ENCODE measurements at regions of chr16 and their contacts with region 1.

Region 1: DNA sequence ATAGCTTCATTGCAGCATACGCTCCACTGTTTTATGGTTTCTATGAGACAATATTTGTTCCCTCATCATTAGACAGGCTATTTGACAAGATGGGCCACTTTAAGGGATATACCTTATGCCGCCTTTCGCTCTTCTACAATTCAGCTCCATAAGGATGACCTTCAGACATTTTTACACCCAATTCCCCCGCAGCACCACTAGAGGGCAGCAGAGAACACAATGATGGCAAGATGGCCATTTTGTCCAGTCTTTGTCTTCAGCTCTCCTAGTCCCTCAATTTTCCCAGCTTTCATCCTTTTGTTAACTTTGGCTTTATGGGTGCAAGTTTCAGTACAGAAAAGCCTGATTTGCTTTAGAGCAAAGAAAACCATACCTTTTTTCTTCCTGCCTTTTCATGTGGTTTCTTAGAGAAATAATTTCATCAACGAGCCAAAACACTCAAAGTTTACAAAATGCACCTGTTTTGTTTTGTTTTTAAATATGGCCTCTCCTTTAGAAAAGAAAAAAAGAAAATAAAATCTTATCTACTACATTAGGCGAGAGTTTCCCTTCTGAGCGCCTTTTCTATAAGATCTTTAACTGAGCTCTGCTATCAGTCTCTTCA is 355.3 kb downstream of the TOX3 start:
- DNase-seq: peak; percentile 15
- ATAC-seq: peak; percentile 69
- H3K4me3 ChIP-seq: no peak overlapping the region
- H3K27ac ChIP-seq: no peak overlapping the region
- H3K4me1 ChIP-seq: no peaks in the 10 kb centered on the region
- H3K27me3 ChIP-seq: no peaks in the 10 kb centered on the region
- CTCF ChIP-seq: peak; percentile 91
- EP300 ChIP-seq: no peak
- POLR2A ChIP-seq: no peak
- RAD21 ChIP-seq: peak; percentile 85

Region 2: DNA sequence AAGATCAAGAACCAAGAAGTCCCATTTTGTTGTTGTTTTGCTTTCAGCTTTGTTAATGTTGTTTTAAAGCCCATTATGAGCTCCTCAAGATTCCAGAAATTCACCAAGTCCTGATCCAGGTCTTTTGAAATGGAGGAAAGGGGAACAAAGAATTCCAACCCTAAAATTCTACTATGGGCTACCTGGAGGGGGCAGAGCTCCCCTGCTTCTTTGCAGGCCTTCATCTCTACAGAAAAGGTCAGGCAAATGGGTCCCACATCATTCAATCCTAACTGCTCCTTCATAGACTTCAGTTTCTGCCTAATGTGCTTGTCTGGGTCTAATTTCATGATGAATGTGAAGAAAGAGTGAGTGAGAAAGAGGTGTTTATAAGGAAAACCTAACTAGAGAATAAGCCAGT is 20.2 kb before region 1 on chr16:
- CTCF ChIA-PET with region 1: interaction called, 13 read pairs
- POLR2A ChIA-PET with region 1: no interaction called
- RAD21 ChIA-PET with region 1: no interaction called
- SMC1A ChIA-PET with region 1: interaction called, 3 read pairs
- in situ Hi-C with region 1: no loop called
- intact Hi-C with region 1: no loop called
- DNase-seq: no peak
- ATAC-seq: no peak
- H3K4me3 ChIP-seq: no peak overlapping the region
- H3K27ac ChIP-seq: no peak overlapping the region
- H3K4me1 ChIP-seq: no peaks in the 10 kb centered on the region
- H3K27me3 ChIP-seq: no peaks in the 10 kb centered on the region
- CTCF ChIP-seq: no peak
- EP300 ChIP-seq: no peak
- POLR2A ChIP-seq: no peak
- RAD21 ChIP-seq: no peak

Region 3: DNA sequence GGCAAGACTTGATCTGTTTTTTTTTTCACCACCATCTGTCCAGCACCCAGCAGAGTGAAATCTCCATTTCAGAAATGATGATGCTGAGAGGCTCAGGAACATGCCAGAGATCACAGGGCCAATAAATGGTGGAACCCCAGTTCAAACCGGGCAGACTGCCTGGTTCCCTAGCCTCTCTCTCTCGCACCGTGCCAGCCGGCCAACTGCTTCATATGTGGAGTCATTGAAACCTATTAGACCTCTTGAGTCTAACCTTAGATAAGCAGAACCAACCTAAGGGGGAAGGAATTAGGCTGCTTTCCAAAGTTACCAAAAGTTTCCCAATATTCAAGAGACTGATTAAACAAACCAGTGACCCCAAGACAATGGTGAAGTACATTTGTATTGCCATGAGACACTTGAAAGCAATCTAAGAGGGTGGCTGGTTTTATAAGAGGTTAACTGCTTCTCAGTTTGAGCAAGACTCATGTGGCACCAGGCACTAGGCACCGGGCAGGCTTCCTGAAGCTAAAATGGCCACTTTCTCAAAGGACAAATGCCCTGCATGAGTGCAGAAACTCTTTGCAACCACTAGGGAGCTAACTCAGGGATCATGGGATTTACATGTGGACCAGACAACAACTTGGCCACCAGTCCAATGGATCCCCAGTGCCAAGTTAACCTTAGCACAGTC is 336.9 kb after region 1 on chr16:
- CTCF ChIA-PET with region 1: interaction called, 5 read pairs
- POLR2A ChIA-PET with region 1: no interaction called
- RAD21 ChIA-PET with region 1: interaction called, 5 read pairs
- SMC1A ChIA-PET with region 1: interaction called, 8 read pairs
- in situ Hi-C with region 1: no loop called
- intact Hi-C with region 1: loop called (anchors 5 kb)
- DNase-seq: no peak
- ATAC-seq: no peak
- H3K4me3 ChIP-seq: no peak overlapping the region
- H3K27ac ChIP-seq: no peak overlapping the region
- H3K4me1 ChIP-seq: no peaks in the 10 kb centered on the region
- H3K27me3 ChIP-seq: no peaks in the 10 kb centered on the region
- CTCF ChIP-seq: no peak
- EP300 ChIP-seq: no peak
- POLR2A ChIP-seq: no peak
- RAD21 ChIP-seq: no peak

Region 4: DNA sequence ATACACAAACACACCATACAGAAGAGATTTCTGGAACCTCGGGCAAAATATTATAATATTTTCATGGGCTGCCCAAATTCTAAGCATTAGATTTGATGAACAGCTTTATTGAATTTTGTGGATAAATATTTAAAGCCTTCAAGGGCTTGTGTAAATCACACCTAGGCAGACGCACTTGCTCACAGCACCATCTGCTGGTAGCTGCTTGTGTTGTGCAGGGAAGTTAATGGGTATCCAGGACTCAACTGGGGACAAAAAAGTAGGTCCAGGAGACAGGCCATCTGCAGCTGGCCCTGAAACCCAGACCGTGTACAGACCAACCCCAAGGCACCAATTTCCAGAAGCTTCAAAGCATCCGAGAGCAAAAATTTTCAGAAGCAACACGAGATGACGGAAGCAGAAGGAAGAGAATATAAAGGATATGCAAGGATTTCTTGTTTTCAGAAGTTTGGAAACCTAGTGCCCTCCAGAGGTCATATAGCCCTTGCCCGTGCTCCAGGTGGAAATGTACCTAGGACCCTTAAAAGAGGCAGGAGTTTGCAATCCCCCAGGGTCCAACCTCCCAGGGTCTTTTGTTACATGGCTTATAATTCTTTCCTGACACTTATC is 721.0 kb after region 1 on chr16:
- CTCF ChIA-PET with region 1: interaction called, 113 read pairs
- POLR2A ChIA-PET with region 1: no interaction called
- RAD21 ChIA-PET with region 1: interaction called, 65 read pairs
- SMC1A ChIA-PET with region 1: interaction called, 85 read pairs
- in situ Hi-C with region 1: loop called (anchors 5 kb)
- intact Hi-C with region 1: loop called (anchors 1 kb)
- DNase-seq: peak; percentile 11
- ATAC-seq: peak; percentile 93
- H3K4me3 ChIP-seq: no peak overlapping the region
- H3K27ac ChIP-seq: no peak overlapping the region
- H3K4me1 ChIP-seq: no peaks in the 10 kb centered on the region
- H3K27me3 ChIP-seq: no peaks in the 10 kb centered on the region
- CTCF ChIP-seq: peak; percentile 76 to 84 (median 77)
- EP300 ChIP-seq: no peak
- POLR2A ChIP-seq: no peak
- RAD21 ChIP-seq: peak; percentile 73

Region 5: GRCh38 chr16:53207810-53208752 is 1016.4 kb after region 1 on chr16:
- CTCF ChIA-PET with region 1: interaction called, 13 read pairs
- POLR2A ChIA-PET with region 1: no interaction called
- RAD21 ChIA-PET with region 1: no interaction called
- SMC1A ChIA-PET with region 1: no interaction called
- in situ Hi-C with region 1: no loop called
- intact Hi-C with region 1: no loop called
- DNase-seq: peak; percentile 69
- ATAC-seq: peak; percentile 83
- H3K4me3 ChIP-seq: peak overlapping the region; percentile 72
- H3K27ac ChIP-seq: peak overlapping the region; percentile 95
- H3K4me1 ChIP-seq: peaks cover 3% of the 10 kb centered on the region; the same call in 1 of the 2 replicates
- H3K27me3 ChIP-seq: no peaks in the 10 kb centered on the region
- CTCF ChIP-seq: peak; percentile 51 to 63 (median 55)
- EP300 ChIP-seq: no peak
- POLR2A ChIP-seq: peak; percentile 57; the same call in 1 of the 2 replicates
- RAD21 ChIP-seq: peak; percentile 58

Measured in GM12878 (cell line).